ENCODE measurements at regions of chr10 and their contacts with region 1.

Region 1: GRCh38 chr10:120942806-120943413 is 91.7 kb downstream of the WDR11 start:
- DNase-seq: peak; percentile 9
- ATAC-seq: peak; percentile 99
- H3K4me3 ChIP-seq: no peak overlapping the region
- H3K27ac ChIP-seq: no peak overlapping the region
- H3K4me1 ChIP-seq: no peaks in the 10 kb centered on the region
- H3K27me3 ChIP-seq: no peaks in the 10 kb centered on the region; a peak in 2 of 4 replicates
- CTCF ChIP-seq: peak; percentile 87 to 97 (median 93)
- EP300 ChIP-seq: no peak
- POLR2A ChIP-seq: no peak
- RAD21 ChIP-seq: peak; percentile 90

Region 2: GRCh38 chr10:120897343-120897742 is 45.6 kb before region 1 on chr10:
- CTCF ChIA-PET with region 1: no interaction called
- POLR2A ChIA-PET with region 1: no interaction called
- RAD21 ChIA-PET with region 1: no interaction called
- SMC1A ChIA-PET with region 1: no interaction called
- in situ Hi-C with region 1: no loop called
- intact Hi-C with region 1: no loop called
- DNase-seq: no peak
- ATAC-seq: no peak
- H3K4me3 ChIP-seq: no peak overlapping the region
- H3K27ac ChIP-seq: no peak overlapping the region
- H3K4me1 ChIP-seq: no peaks in the 10 kb centered on the region
- H3K27me3 ChIP-seq: no peaks in the 10 kb centered on the region
- CTCF ChIP-seq: no peak
- EP300 ChIP-seq: no peak
- POLR2A ChIP-seq: no peak
- RAD21 ChIP-seq: no peak

Region 3: GRCh38 chr10:120960718-120961117 is 17.8 kb after region 1 on chr10:
- CTCF ChIA-PET with region 1: no interaction called
- POLR2A ChIA-PET with region 1: no interaction called
- RAD21 ChIA-PET with region 1: no interaction called
- SMC1A ChIA-PET with region 1: no interaction called
- in situ Hi-C with region 1: no loop called
- intact Hi-C with region 1: no loop called
- DNase-seq: no peak
- ATAC-seq: no peak
- H3K4me3 ChIP-seq: no peak overlapping the region
- H3K27ac ChIP-seq: no peak overlapping the region
- H3K4me1 ChIP-seq: no peaks in the 10 kb centered on the region
- H3K27me3 ChIP-seq: peaks cover 2% of the 10 kb centered on the region in 2 experiments; a peak in 1 of 4 replicates
- CTCF ChIP-seq: no peak
- EP300 ChIP-seq: no peak
- POLR2A ChIP-seq: no peak
- RAD21 ChIP-seq: no peak

Region 4: GRCh38 chr10:121608469-121609190 is 665.7 kb after region 1 on chr10:
- CTCF ChIA-PET with region 1: interaction called, 3 read pairs
- POLR2A ChIA-PET with region 1: no interaction called
- RAD21 ChIA-PET with region 1: interaction called, 3 read pairs
- SMC1A ChIA-PET with region 1: interaction called, 5 read pairs
- in situ Hi-C with region 1: loop called (anchors 5 kb)
- intact Hi-C with region 1: loop called (anchors 2 kb)
- DNase-seq: no peak
- ATAC-seq: peak; percentile 97
- H3K4me3 ChIP-seq: no peak overlapping the region
- H3K27ac ChIP-seq: no peak overlapping the region
- H3K4me1 ChIP-seq: no peaks in the 10 kb centered on the region
- H3K27me3 ChIP-seq: no peaks in the 10 kb centered on the region
- CTCF ChIP-seq: peak; percentile 59 to 74 (median 62); a peak in 5 of 6 replicates
- EP300 ChIP-seq: no peak
- POLR2A ChIP-seq: no peak
- RAD21 ChIP-seq: peak; percentile 65

Region 5: DNA sequence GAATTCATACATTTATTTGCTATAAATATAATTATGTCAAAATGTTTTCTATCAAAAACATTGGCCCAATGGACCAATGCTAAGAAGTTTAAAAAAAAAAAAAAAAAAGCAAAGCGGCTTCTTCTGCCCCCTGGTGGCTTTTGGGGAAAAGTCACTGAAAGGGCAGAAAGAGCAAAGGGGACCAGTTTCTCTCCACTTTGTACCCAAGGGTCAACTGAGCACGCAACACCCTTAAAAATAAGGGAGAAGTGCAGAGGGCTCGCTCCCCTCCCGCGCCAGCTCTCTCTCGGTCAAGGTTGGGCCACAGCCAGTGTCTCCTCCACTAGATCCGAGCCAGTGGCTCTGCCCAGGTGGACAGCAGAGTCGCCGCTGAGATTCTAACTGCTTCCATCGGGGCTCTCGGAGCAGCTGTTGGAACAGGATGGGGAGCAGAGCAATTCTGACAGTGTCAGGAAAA is 791.7 kb after region 1 on chr10:
- CTCF ChIA-PET with region 1: interaction called, 7 read pairs
- POLR2A ChIA-PET with region 1: no interaction called
- RAD21 ChIA-PET with region 1: interaction called, 3 read pairs
- SMC1A ChIA-PET with region 1: interaction called, 6 read pairs
- in situ Hi-C with region 1: loop called (anchors 5 kb)
- intact Hi-C with region 1: loop called (anchors 1 kb)
- DNase-seq: no peak
- ATAC-seq: peak; percentile 57
- H3K4me3 ChIP-seq: no peak overlapping the region
- H3K27ac ChIP-seq: no peak overlapping the region
- H3K4me1 ChIP-seq: no peaks in the 10 kb centered on the region
- H3K27me3 ChIP-seq: peaks cover 0 to 4% of the 10 kb centered on the region in 2 experiments; a peak in 1 of 4 replicates
- CTCF ChIP-seq: peak; percentile 58 to 65 (median 60); a peak in 5 of 6 replicates
- EP300 ChIP-seq: no peak
- POLR2A ChIP-seq: no peak
- RAD21 ChIP-seq: peak; percentile 63

Region 6: GRCh38 chr10:121886997-121887622 is 944.2 kb after region 1 on chr10:
- CTCF ChIA-PET with region 1: no interaction called
- POLR2A ChIA-PET with region 1: no interaction called
- RAD21 ChIA-PET with region 1: no interaction called
- SMC1A ChIA-PET with region 1: no interaction called
- in situ Hi-C with region 1: no loop called
- intact Hi-C with region 1: loop called (anchors 1 kb)
- DNase-seq: no peak
- ATAC-seq: peak; percentile 88
- H3K4me3 ChIP-seq: no peak overlapping the region
- H3K27ac ChIP-seq: no peak overlapping the region
- H3K4me1 ChIP-seq: no peaks in the 10 kb centered on the region
- H3K27me3 ChIP-seq: no peaks in the 10 kb centered on the region
- CTCF ChIP-seq: peak; percentile 65 to 68 (median 67); a peak in 5 of 6 replicates
- EP300 ChIP-seq: no peak
- POLR2A ChIP-seq: no peak
- RAD21 ChIP-seq: peak; percentile 54